Dorsolateral prefrontal cortex (tissue), 120 donors: ENCODE measurements at regions of chr20 and their contacts with region 1.

Region 1: DNA sequence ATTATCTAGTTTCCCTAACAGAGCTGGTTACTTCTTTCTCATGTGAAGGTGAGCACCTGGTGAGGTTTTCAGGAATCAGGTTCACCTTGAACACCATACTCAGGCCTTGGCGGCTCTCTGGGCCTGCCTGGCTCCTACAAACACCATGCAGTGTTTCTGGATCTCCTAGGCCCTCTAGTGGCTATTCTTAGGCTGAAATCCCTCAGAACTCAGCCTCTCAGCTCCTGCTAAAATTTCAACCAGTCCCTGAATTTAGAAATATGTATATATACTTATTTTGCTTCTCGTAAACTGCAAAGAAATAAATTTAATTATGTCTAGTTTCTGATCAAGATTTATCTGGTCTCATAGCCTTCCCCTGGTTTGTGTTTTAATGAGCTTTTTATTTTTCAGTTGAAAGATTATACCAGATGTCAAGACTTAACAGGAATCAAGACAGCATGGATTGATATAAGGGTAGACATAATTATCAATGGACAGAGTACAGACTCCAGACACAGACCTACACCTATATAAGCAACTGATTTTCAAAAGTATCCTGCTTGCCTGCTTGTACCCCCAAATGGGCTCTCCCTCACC is 55.9 kb downstream of the ANKEF1 start:
- DNase-seq: peak in 9 of 10 donors; percentile 29 to 62 (median 48)
- H3K4me3 ChIP-seq: no peak overlapping the region
- H3K27ac ChIP-seq: peak overlapping the region in 9 of 59 donors; percentile 1 to 25 (median 11)
- H3K27me3 ChIP-seq: no peaks in the 10 kb centered on the region
- CTCF ChIP-seq: peak in 54 of 56 donors; percentile 54 to 85 (median 73)

Region 2: DNA sequence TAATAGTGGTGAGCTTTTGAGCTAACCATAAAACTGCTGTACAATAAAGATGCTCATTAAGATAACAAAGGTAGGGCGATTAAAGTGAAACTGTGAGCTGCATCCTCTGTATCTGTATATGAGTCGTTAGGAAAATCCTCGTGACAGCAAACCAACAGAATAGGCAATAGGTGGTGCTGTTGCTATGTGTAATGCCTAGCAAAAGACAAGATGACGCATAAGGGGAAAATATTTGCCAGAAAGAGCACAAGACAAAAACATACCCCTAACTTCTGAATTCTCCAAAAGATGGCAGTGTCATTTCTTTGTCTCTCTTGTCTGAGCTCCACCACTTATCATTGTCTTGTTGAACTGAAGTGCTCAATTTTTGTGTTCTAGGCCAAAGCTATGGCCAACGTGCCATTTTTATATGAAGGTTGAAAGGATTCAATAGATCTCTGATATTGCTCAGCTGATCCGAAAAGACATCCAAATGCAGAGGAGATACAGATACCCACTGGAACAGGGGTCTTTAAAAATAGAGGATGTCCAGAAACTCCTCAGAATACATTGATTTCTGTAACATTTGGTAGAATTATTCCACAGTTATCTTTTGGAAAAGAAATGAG is 112.2 kb before region 1 on chr20:
- intact Hi-C with region 1: loop called (anchors 2 to 5 kb)
- DNase-seq: peak in 3 of 10 donors; percentile 44 to 66 (median 55)
- H3K4me3 ChIP-seq: peak overlapping the region in 16 of 59 donors; percentile 4 to 39 (median 15)
- H3K27ac ChIP-seq: peak overlapping the region in 12 of 59 donors; percentile 0 to 58 (median 25)
- H3K27me3 ChIP-seq: no peaks in the 10 kb centered on the region
- CTCF ChIP-seq: peak; percentile 59 to 98 (median 87)

Region 3: DNA sequence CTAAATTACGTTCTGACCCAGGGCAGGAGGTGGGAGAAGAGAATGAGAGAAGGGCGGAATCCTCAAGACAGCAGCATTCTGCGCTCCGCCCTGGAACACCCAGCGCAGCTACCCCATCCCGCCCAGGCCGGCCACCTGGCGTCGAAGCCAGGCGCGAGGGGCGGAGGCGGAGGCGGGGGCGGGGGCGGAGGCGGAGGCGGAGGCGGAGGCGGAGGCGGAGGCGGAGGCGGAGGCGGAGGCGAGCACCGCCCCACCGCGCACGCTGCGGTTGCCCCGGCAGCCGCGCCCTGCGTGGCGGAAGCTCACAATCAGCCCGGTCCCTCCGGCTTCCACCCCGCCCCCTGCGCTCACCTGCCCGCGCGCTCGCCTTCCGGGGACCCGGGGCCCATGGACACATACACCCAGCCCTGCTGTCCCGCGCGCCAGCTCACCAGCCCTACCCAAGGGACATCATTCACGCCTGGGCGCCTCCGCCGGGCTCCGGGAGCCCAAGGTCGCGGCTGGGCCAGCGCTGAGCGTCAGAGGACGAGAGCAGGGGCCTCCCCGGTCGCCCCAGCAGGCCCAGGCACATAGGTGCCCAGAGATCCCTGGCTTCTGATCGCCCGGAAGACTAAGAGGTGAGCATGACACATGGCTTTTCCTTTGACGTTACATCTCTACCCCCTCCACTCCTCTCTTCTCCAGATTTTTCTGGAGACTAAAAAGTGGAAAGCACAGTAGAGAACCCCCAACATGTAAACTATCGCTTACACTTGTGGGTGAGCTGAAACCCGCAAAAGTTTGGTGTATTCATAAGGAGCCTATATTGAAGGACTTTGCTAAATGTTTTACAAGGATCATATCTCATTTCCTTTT is 55.7 kb before region 1 on chr20 and contains the start of gene ANKEF1:
- intact Hi-C with region 1: loop called in 1 of 2 experiments (anchors 5 kb)
- DNase-seq: peak in 9 of 10 donors; percentile 27 to 77 (median 51)
- H3K4me3 ChIP-seq: peak within 1 kb of the TSS; percentile 47 to 86 (median 73)
- H3K27ac ChIP-seq: peak within 1 kb of the TSS in 48 of 59 donors; percentile 13 to 86 (median 72)
- H3K27me3 ChIP-seq: no peaks in the 10 kb centered on the region
- CTCF ChIP-seq: peak in 8 of 56 donors; percentile 11 to 32 (median 16)
- total RNA-seq, gene ANKEF1: 0.81 to 3.0 (median 1.7) TPM

Region 4: GRCh38 chr20:10171864-10172751 is 81.4 kb after region 1 on chr20:
- intact Hi-C with region 1: loop called in 1 of 2 experiments (anchors 5 kb)
- DNase-seq: peak; percentile 49 to 90 (median 78)
- H3K4me3 ChIP-seq: peak overlapping the region; percentile 29 to 74 (median 55)
- H3K27ac ChIP-seq: peak overlapping the region in 58 of 59 donors; percentile 45 to 97 (median 87)
- H3K27me3 ChIP-seq: no peaks in the 10 kb centered on the region
- CTCF ChIP-seq: peak in 1 of 56 donors; percentile 18

Region 5: GRCh38 chr20:10427060-10427692 is 336.5 kb after region 1 on chr20:
- intact Hi-C with region 1: loop called in 1 of 2 experiments (anchors 5 kb)
- DNase-seq: peak; percentile 44 to 81 (median 64)
- H3K4me3 ChIP-seq: no peak overlapping the region
- H3K27ac ChIP-seq: peak overlapping the region in 3 of 59 donors; percentile 6 to 23 (median 10)
- H3K27me3 ChIP-seq: no peaks in the 10 kb centered on the region
- CTCF ChIP-seq: peak; percentile 61 to 86 (median 76)